MCF 10A (cell line): ENCODE measurements at regions of chr14 and their contacts with region 1.

Region 1: GRCh38 chr14:54805521-54806322 is 96.9 kb downstream of the GCH1 start:
- DNase-seq: peak; percentile 86
- H3K4me3 Mint-ChIP-seq: no peak overlapping the region
- H3K27ac Mint-ChIP-seq: no peak overlapping the region
- H3K4me1 Mint-ChIP-seq: peaks cover 12% of the 10 kb centered on the region
- H3K27me3 Mint-ChIP-seq: peaks cover under 1% of the 10 kb centered on the region
- CTCF ChIP-seq: peak; percentile 91

Region 2: DNA sequence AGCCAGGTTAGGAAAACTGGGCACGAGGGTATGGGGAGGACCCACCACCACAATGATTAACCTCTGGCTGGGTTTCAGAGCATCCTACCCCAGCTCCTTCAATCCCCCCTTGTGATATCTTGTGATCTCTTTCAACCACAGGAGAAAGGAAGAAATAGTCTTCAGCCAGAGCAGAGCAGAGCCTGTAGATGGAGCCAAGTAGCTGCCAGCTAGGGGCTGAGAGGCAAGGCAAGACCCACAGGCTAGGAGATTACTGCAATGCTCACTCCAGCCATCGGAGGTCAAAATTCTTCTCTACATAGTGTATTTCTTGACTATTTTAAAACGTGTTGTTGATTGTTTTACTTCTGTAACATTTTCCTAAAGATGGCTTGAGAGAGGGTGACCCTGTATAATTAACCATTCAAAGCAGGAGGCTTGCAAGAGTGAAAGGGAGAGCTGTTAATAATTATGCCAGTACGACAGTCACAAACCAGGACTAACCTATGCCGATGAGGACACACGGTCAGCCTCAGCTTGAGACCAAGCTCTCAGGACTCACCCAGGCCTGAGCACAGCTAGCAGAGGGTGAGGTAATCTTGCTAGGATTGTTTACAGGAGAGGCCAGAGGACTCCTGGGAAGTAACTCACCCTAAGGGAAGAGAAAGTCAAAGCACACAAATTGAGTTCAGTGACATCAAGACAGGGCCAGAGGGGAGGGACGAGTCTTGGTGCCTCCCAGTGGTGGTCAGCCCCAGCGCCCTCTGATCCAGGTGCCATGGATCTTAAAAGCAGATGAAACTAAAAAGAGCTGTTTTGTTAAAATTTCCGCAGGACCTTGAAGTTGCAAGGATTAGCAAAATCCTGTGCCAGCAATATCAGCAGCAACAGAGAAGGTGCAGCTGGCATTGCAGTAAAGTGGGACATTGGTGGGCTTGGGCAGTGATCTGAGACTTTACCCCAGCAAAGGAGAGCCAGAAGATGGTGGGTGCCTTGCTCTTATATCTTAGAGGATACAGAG is 438.7 kb before region 1 on chr14:
- CTCF ChIA-PET with region 1: no interaction called
- POLR2A ChIA-PET with region 1: no interaction called
- intact Hi-C with region 1: loop called (anchors 5 kb)
- DNase-seq: peak; percentile 62
- H3K4me3 Mint-ChIP-seq: no peak overlapping the region
- H3K27ac Mint-ChIP-seq: no peak overlapping the region
- H3K4me1 Mint-ChIP-seq: no peaks in the 10 kb centered on the region
- H3K27me3 Mint-ChIP-seq: no peaks in the 10 kb centered on the region
- CTCF ChIP-seq: peak; percentile 39

Region 3: DNA sequence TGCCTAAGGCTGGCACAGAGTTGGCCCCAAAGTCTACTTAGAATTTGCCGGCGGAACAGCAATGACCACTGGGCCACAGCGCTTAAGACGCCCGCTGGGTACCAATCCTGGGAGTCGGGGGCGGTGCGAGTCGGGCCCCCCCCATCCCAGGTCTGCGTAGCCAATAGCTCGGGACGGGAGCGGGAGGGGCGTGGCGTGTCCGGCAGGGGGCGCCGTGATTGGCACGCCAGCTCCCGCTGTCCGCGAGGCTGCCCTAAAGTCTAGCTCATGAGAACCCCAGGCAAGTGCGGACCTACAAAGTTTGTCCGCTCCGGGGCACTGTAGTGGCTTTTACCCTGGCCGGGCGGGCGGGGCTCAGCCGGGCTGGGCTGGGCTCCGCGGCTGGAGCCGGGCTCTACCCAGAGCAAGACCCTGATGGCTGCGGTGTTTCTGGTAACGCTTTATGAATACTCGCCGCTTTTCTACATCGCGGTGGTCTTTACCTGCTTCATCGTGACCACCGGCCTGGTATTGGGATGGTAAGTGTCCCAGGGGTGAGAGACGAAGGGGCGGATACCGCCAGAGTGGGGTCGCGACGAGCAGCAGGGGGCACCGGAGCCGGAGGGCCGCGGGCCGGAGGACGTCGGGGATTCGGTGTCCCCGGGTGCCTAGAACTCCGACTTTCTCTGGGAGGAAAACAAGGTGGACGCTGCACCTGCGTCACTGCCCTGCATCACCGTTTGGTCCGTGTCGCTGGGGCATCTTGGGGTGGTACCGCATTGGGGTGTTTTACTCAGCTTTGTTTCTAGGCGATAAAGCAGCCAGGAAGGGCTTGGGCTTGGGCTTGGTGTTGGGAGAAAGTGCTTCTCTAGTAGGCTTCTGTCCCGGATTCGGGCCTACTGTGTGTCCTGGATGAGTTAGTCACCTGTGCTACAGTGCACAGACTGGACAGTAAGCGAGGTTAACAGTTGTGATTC is 295.9 kb before region 1 on chr14 and contains the start of gene CGRRF1:
- CTCF ChIA-PET with region 1: interaction called, 4 read pairs
- POLR2A ChIA-PET with region 1: no interaction called
- intact Hi-C with region 1: loop called (anchors 5 kb)
- DNase-seq: peak; percentile 97
- H3K4me3 Mint-ChIP-seq: peak within 1 kb of the TSS; percentile 96
- H3K27ac Mint-ChIP-seq: peak within 1 kb of the TSS; percentile 86
- H3K4me1 Mint-ChIP-seq: peaks cover 20% of the 10 kb centered on the region
- H3K27me3 Mint-ChIP-seq: no peaks in the 10 kb centered on the region
- CTCF ChIP-seq: peak; percentile 30
- total RNA-seq, gene CGRRF1: 17.5 and 22.3 TPM in 2 replicates

Region 4: GRCh38 chr14:54792288-54792687 is 13.4 kb before region 1 on chr14:
- CTCF ChIA-PET with region 1: interaction called, 32 read pairs
- POLR2A ChIA-PET with region 1: no interaction called
- intact Hi-C with region 1: no loop called
- DNase-seq: no peak
- H3K4me3 Mint-ChIP-seq: no peak overlapping the region
- H3K27ac Mint-ChIP-seq: no peak overlapping the region
- H3K4me1 Mint-ChIP-seq: peaks cover 4% of the 10 kb centered on the region
- H3K27me3 Mint-ChIP-seq: no peaks in the 10 kb centered on the region
- CTCF ChIP-seq: no peak

Region 5: DNA sequence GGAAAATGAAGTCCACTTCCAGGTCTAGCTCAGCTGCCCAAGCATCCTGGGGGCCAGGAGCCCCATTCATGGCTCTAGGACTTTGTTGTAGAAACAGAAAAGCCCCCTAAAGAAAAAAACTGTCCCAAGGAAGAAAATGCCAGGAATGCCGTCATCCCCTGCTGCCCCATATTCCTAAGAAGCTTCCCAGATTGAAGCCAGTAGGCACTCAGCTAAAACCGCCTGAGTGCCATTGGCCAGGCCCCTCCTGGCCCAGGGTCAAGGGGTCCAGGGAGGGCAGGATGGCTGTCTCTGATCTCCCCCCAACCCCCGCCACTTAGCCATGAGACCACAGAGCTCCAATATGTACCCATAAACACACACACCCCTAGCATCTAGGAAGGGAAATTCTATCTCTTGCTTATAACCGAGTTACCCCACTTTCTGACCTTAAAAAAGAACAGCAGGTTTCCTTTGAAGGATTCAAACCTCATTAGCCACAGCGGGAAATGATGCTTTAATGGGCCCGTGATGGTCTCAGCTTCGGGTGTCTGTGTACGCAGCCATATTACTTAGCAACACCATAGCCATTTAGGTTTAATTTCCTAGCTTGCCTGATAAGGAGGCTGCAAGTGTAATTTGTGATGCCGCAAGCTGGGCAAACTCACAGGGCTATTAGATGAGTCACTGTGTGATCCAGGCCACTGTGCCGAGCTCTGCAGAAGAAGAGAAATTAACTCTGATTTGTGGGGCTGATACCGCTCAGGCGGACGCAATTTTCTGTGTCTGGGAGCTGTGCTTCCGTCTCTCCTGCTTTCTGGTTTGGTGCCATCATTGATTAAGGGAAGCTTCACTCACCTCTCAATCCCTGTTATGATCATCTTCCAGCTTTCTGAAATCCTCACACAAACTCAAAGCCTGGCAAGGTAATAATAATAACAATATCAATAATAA is 12.7 kb after region 1 on chr14:
- CTCF ChIA-PET with region 1: interaction called, 20 read pairs
- POLR2A ChIA-PET with region 1: interaction called, 3 read pairs
- intact Hi-C with region 1: no loop called
- DNase-seq: peak; percentile 20
- H3K4me3 Mint-ChIP-seq: no peak overlapping the region
- H3K27ac Mint-ChIP-seq: no peak overlapping the region
- H3K4me1 Mint-ChIP-seq: no peaks in the 10 kb centered on the region
- H3K27me3 Mint-ChIP-seq: peaks cover 15% of the 10 kb centered on the region
- CTCF ChIP-seq: no peak

Region 6: GRCh38 chr14:54893151-54893760 is 87.5 kb after region 1 on chr14:
- CTCF ChIA-PET with region 1: no interaction called
- POLR2A ChIA-PET with region 1: no interaction called
- intact Hi-C with region 1: loop called (anchors 1 kb)
- DNase-seq: peak; percentile 80
- H3K4me3 Mint-ChIP-seq: no peak overlapping the region
- H3K27ac Mint-ChIP-seq: no peak overlapping the region
- H3K4me1 Mint-ChIP-seq: peaks cover 6% of the 10 kb centered on the region
- H3K27me3 Mint-ChIP-seq: no peaks in the 10 kb centered on the region
- CTCF ChIP-seq: peak; percentile 65